ENCODE measurements at regions of chr7 and their contacts with region 1.

Region 1: DNA sequence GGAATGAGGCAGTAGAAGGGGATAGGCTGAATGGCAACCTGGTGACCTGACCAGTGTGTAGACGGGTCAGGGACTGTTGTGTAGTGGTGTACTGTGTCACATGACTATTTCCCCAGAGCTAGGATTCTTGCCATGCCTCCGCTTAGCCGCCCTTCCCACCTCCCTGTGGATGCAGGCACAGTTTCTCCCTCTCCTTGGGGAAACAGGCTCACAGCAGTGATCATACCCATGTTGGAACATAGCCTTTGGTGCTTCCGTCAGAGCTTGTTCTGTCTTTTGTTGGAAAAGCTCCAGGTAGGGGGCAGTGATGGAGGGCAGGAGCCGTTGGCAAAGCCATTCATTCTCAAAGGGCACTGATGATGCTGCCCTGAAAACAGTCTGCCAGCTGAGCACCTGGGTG is 44.3 kb downstream of the OGDH start:
- DNase-seq: peak in 1 of 2 donors; percentile 27
- ATAC-seq: peak; percentile 73 to 84 (median 79)
- H3K4me3 ChIP-seq: no peak overlapping the region
- H3K27ac ChIP-seq: peak overlapping the region; percentile 72
- H3K4me1 ChIP-seq: peaks cover 35% of the 10 kb centered on the region
- H3K27me3 ChIP-seq: no peaks in the 10 kb centered on the region
- CTCF ChIP-seq: no peak

Region 2: DNA sequence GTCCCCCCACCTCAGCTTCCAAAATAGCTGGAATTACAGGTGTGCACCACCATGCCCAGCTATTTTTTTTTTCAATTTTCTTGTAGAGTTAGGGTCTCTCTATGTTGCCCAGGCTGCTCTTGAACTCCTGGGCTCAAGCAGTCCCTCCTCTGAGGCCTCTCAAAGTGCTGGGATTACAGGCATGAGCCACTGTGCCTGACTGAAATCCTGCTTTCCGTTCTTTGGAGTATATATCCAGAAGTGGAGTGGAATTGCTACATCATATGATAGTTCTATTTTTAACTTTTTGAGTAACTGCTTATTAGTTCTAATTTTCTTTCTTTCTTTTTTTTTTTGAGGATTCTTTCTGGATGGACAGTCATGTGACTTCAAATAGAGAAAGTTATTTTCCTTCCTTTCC is 35.0 kb after region 1 on chr7:
- intact Hi-C with region 1: loop called in 1 of 2 experiments (anchors 5 kb)
- DNase-seq: no peak
- ATAC-seq: peak in 2 of 4 donors; percentile 21 to 33
- H3K4me3 ChIP-seq: no peak overlapping the region
- H3K27ac ChIP-seq: peak overlapping the region; percentile 67
- H3K4me1 ChIP-seq: peaks cover 8% of the 10 kb centered on the region
- H3K27me3 ChIP-seq: no peaks in the 10 kb centered on the region
- CTCF ChIP-seq: no peak

Region 3: GRCh38 chr7:44712012-44712411 is 61.2 kb after region 1 on chr7:
- intact Hi-C with region 1: no loop called
- DNase-seq: no peak
- ATAC-seq: peak in 1 of 4 donors; percentile 7
- H3K4me3 ChIP-seq: no peak overlapping the region
- H3K27ac ChIP-seq: no peak overlapping the region
- H3K4me1 ChIP-seq: peaks cover 3% of the 10 kb centered on the region
- H3K27me3 ChIP-seq: no peaks in the 10 kb centered on the region
- CTCF ChIP-seq: no peak